WTC11 (cell line): ENCODE measurements at regions of chr4 and their contacts with region 1.

Region 1: GRCh38 chr4:118352843-118353533 is at the start of gene PRSS12:
- DNase-seq: peak; percentile 87
- ATAC-seq: peak; percentile 83
- H3K4me3 Mint-ChIP-seq: peak within 1 kb of the TSS; percentile 80
- H3K27ac Mint-ChIP-seq: no peak within 1 kb of the TSS
- H3K4me1 Mint-ChIP-seq: peaks cover 41% of the 10 kb centered on the region
- H3K27me3 Mint-ChIP-seq: peaks cover 36% of the 10 kb centered on the region
- CTCF ChIP-seq: peak; percentile 78
- total RNA-seq, gene PRSS12: 8.4 to 14.1 TPM (median 10.5 TPM) in 3 replicates

Region 2: DNA sequence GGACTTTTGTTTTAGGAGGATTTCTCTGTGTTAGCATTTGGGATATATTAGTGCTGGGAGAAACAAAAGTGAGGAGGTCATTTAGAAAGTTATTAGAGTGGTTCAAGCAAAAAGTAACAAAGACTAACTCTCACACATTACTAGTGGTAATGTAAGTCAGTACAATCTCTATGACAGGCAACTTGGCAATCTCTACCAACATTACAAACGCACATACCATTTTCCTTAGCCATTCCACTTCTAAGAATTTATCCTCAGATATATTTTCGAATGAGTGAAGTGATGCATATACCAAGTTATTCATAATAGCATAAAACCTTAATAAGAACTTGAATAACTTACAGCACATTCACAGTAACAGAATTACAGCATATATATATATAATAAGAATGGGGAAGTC is 146.4 kb before region 1 on chr4:
- CTCF ChIA-PET with region 1: no interaction called
- POLR2A ChIA-PET with region 1: no interaction called
- DNase-seq: no peak
- ATAC-seq: no peak
- H3K4me3 Mint-ChIP-seq: no peak overlapping the region
- H3K27ac Mint-ChIP-seq: no peak overlapping the region
- H3K4me1 Mint-ChIP-seq: peaks cover 20% of the 10 kb centered on the region
- H3K27me3 Mint-ChIP-seq: no peaks in the 10 kb centered on the region
- CTCF ChIP-seq: no peak

Region 3: GRCh38 chr4:118307643-118308042 is 45.3 kb before region 1 on chr4:
- CTCF ChIA-PET with region 1: interaction called, 12 read pairs
- POLR2A ChIA-PET with region 1: no interaction called
- DNase-seq: no peak
- ATAC-seq: peak; percentile 59
- H3K4me3 Mint-ChIP-seq: no peak overlapping the region
- H3K27ac Mint-ChIP-seq: peak overlapping the region; percentile 19; the same call in 1 of the 2 replicates
- H3K4me1 Mint-ChIP-seq: peaks cover 14% of the 10 kb centered on the region
- H3K27me3 Mint-ChIP-seq: no peaks in the 10 kb centered on the region
- CTCF ChIP-seq: no peak

Region 4: DNA sequence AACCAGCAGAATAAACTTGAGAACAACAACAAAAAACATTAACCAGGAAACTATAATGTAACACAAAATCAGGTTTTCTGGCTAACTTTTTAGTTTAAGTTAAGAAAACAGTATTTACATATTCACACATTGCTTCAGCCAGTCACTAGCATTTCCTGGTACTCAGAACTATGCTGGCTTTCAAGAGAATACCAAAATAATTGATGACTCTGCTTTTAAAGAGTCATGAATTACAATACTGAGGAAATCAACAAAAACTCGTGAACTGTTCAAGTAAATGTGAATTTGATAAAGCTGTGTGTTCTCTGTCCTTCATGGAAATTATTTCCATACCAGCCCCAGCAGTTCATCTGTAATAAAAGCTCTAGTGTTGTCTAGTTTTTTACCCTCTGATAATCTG is 27.6 kb before region 1 on chr4:
- CTCF ChIA-PET with region 1: interaction called, 10 read pairs
- POLR2A ChIA-PET with region 1: no interaction called
- DNase-seq: no peak
- ATAC-seq: no peak
- H3K4me3 Mint-ChIP-seq: no peak overlapping the region
- H3K27ac Mint-ChIP-seq: peak overlapping the region; percentile 19; the same call in 1 of the 2 replicates
- H3K4me1 Mint-ChIP-seq: peaks cover 31% of the 10 kb centered on the region
- H3K27me3 Mint-ChIP-seq: no peaks in the 10 kb centered on the region
- CTCF ChIP-seq: no peak

Region 5: DNA sequence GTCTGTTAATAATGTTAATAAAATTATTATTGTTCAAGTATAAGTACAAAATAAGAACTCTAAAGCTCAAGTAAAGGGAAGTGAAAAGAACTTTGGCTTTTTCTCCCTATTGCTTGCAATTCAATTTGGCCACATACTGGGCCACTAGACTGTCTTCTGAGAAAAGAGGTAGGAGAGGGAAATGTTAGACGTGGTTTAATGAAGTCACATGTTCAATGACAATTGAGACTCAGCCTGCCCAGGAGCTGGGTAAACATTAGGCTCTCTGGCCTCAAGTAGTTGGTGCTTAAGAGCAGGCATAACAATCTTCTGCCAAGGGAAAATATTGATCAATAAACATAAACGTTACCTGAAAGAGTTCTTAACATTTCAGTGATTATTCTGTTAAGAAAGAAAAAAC is 14.9 kb after region 1 on chr4:
- CTCF ChIA-PET with region 1: interaction called, 37 read pairs
- POLR2A ChIA-PET with region 1: no interaction called
- DNase-seq: no peak
- ATAC-seq: peak; percentile 63
- H3K4me3 Mint-ChIP-seq: no peak overlapping the region
- H3K27ac Mint-ChIP-seq: no peak overlapping the region
- H3K4me1 Mint-ChIP-seq: peaks cover 10% of the 10 kb centered on the region
- H3K27me3 Mint-ChIP-seq: no peaks in the 10 kb centered on the region
- CTCF ChIP-seq: no peak

Region 6: GRCh38 chr4:118684873-118685811 is 332.2 kb after region 1 on chr4 and contains the start of gene METTL14:
- CTCF ChIA-PET with region 1: interaction called, 18 read pairs
- POLR2A ChIA-PET with region 1: interaction called, 3 read pairs
- DNase-seq: peak; percentile 97
- ATAC-seq: peak; percentile 94
- H3K4me3 Mint-ChIP-seq: peak within 1 kb of the TSS; percentile 99
- H3K27ac Mint-ChIP-seq: peak within 1 kb of the TSS; percentile 96
- H3K4me1 Mint-ChIP-seq: peaks cover 17% of the 10 kb centered on the region
- H3K27me3 Mint-ChIP-seq: no peaks in the 10 kb centered on the region
- CTCF ChIP-seq: no peak
- total RNA-seq, gene METTL14: 49.7 to 53.1 TPM (median 51.1 TPM) in 3 replicates